Endothelial cell of umbilical vein (primary cell): ENCODE measurements at regions of chr1 and their contacts with region 1.

Region 1: GRCh38 chr1:193059268-193060225 is at the starts of genes RO60 and UCHL5:
- DNase-seq: peak; percentile 99
- H3K4me3 ChIP-seq: peak within 1 kb of the TSS; percentile 49 to 86 (median 78)
- H3K27ac ChIP-seq: peak within 1 kb of the TSS; percentile 65
- H3K4me1 ChIP-seq: peaks cover 29% of the 10 kb centered on the region
- H3K27me3 ChIP-seq: no peaks in the 10 kb centered on the region
- CTCF ChIP-seq: no peak
- POLR2A ChIP-seq: peak; percentile 85
- total RNA-seq, gene RO60: 60.3 and 61.8 TPM in 2 replicates
- total RNA-seq, gene UCHL5: 45.6 and 50.8 TPM in 2 replicates

Region 2: DNA sequence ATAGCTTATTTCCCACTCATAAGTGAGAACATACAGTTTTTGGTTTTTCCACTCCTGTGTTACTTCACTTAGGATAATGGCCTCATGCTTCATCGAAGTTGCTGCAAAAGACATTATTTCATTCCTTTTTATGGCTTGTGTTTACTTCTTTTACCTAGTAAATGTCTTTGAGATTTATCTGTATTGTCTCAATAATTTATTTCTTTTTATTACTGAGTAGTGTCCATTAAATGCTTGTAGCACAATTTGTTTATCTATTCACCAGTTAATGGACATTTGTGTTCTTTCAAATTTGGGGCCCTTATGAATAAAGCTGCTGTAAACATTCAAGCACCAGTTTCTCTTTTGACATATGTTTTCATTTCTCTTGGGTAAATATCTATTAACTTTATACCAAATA is 86.3 kb before region 1 on chr1:
- CTCF ChIA-PET with region 1: no interaction called
- POLR2A ChIA-PET with region 1: no interaction called
- dilution Hi-C with region 1: no loop called
- intact Hi-C with region 1: no loop called
- DNase-seq: no peak
- H3K4me3 ChIP-seq: no peak overlapping the region
- H3K27ac ChIP-seq: no peak overlapping the region
- H3K4me1 ChIP-seq: peaks cover 8% of the 10 kb centered on the region
- H3K27me3 ChIP-seq: no peaks in the 10 kb centered on the region
- CTCF ChIP-seq: no peak
- POLR2A ChIP-seq: no peak

Region 3: GRCh38 chr1:193104906-193105820 is 45.6 kb after region 1 on chr1 and contains the start of gene GLRX2:
- CTCF ChIA-PET with region 1: interaction called, 11 read pairs
- POLR2A ChIA-PET with region 1: interaction called, 5 read pairs
- dilution Hi-C with region 1: no loop called
- intact Hi-C with region 1: loop called (anchors 1 kb)
- DNase-seq: peak; percentile 90
- H3K4me3 ChIP-seq: peak within 1 kb of the TSS; percentile 58 to 96 (median 93)
- H3K27ac ChIP-seq: peak within 1 kb of the TSS; percentile 69
- H3K4me1 ChIP-seq: peaks cover 15% of the 10 kb centered on the region
- H3K27me3 ChIP-seq: no peaks in the 10 kb centered on the region
- CTCF ChIP-seq: no peak
- POLR2A ChIP-seq: peak; percentile 94
- total RNA-seq, gene GLRX2: 21.5 and 22.2 TPM in 2 replicates